Dorsolateral prefrontal cortex (tissue), 120 donors: ENCODE measurements at regions of chr2 and their contacts with region 1.

Region 1: GRCh38 chr2:63698825-63699548 is 110.2 kb downstream of the MDH1 start:
- DNase-seq: peak in 2 of 10 donors; percentile 6 to 27
- H3K4me3 ChIP-seq: no peak overlapping the region
- H3K27ac ChIP-seq: no peak overlapping the region
- H3K27me3 ChIP-seq: no peaks in the 10 kb centered on the region
- CTCF ChIP-seq: peak in 55 of 56 donors; percentile 21 to 75 (median 61)

Region 2: GRCh38 chr2:63841254-63842022 is 142.5 kb after region 1 on chr2 and contains the start of gene UGP2:
- intact Hi-C with region 1: loop called in 1 of 2 experiments (anchors 5 kb)
- DNase-seq: peak; percentile 54 to 85 (median 71)
- H3K4me3 ChIP-seq: peak within 1 kb of the TSS; percentile 73 to 99 (median 93)
- H3K27ac ChIP-seq: peak within 1 kb of the TSS; percentile 85 to 99 (median 97)
- H3K27me3 ChIP-seq: no peaks in the 10 kb centered on the region
- CTCF ChIP-seq: peak in 48 of 56 donors; percentile 2 to 66 (median 41)
- total RNA-seq, gene UGP2: 84.4 to 293 (median 212) TPM

Region 3: DNA sequence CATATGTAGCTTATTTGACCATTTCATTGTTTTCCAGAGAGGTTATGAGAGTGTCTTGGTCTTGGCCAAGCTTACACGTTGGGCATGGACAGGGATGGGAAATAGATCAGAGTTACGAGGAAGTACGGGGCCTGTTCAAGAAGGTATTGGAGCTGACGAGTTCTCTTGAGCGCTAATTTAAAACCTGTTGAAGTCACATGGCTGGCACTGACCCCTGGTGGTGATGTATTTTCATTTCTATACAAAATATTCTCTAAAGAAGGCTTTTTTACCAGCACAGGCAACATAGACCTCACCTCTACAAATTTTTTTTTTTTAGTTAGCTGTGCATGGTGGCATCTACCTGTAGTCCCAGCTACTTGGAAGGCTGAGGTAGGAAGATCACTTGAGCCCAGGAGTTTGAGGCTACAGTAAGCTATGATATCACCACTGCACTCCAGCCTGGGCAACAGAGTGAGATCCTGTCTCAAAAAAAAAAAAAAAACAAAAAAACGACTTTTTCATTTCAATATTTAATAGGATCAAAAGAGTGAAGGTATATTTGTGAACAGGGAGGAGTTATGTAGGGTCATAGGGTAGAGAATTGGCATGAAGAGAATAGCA is 162.3 kb after region 1 on chr2:
- intact Hi-C with region 1: loop called (anchors 5 kb)
- DNase-seq: peak in 2 of 10 donors; percentile 47 to 56
- H3K4me3 ChIP-seq: no peak overlapping the region
- H3K27ac ChIP-seq: peak overlapping the region in 9 of 59 donors; percentile 3 to 44 (median 14)
- H3K27me3 ChIP-seq: no peaks in the 10 kb centered on the region
- CTCF ChIP-seq: peak; percentile 41 to 80 (median 64)

Region 4: GRCh38 chr2:63888490-63889402 is 189.8 kb after region 1 on chr2:
- intact Hi-C with region 1: loop called in 1 of 2 experiments (anchors 5 kb)
- DNase-seq: peak in 7 of 10 donors; percentile 26 to 63 (median 49)
- H3K4me3 ChIP-seq: no peak overlapping the region
- H3K27ac ChIP-seq: peak overlapping the region in 30 of 59 donors; percentile 3 to 68 (median 21)
- H3K27me3 ChIP-seq: no peaks in the 10 kb centered on the region
- CTCF ChIP-seq: peak; percentile 46 to 83 (median 74)

Region 5: DNA sequence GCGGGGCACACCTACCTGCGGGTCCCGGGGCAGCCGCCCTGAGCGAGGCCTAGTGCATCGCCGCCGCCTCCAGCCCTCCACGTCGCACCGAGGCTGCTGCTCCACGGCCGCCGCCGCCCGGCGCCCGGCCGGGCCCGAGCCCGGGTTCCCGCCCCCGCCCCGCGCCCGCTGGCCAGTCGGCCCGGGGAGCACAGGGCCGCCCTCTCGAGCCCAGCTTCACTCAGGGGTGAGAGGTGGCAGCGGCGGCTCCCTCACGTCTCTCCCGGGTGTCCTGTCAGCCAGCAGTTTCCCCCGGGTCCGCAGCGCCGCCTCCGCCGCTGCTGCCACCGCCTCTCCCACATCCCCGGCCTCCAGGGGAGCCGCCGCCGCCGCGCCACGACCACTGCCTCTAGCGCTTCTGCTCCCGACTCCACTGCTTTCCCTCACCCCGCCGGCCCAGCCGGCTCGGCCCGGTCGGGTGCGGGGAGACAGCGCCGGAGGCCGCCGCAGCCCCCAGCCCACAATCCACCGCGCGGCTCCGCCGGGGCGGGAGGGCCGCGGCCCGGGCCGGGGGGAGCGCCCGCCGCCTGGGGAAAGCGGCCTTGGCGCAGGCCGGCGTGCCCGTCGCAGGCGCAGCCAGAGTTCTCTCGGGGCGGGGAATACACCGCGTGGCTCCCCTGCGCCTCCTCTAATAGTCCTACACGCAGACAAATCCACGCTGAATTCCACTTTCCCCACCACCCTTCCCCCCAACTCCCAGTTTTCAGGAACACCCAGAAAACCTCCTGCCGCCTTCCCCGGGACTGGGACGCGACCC is 320.1 kb after region 1 on chr2 and contains the start of gene VPS54:
- intact Hi-C with region 1: loop called in 1 of 2 experiments (anchors 10 kb)
- DNase-seq: peak; percentile 43 to 85 (median 60)
- H3K4me3 ChIP-seq: peak within 1 kb of the TSS; percentile 38 to 88 (median 73)
- H3K27ac ChIP-seq: peak within 1 kb of the TSS; percentile 53 to 99 (median 93)
- H3K27me3 ChIP-seq: no peaks in the 10 kb centered on the region
- CTCF ChIP-seq: peak in 11 of 56 donors; percentile 1 to 47 (median 13)
- total RNA-seq, gene VPS54: 11.8 to 23.3 (median 17.3) TPM